ENCODE measurements at regions of chr18 and their contacts with region 1.

Region 1: GRCh38 chr18:10953672-10954071 is 195.7 kb downstream of the PIEZO2 start:
- DNase-seq: no peak
- ATAC-seq: no peak
- H3K4me3 ChIP-seq: no peak overlapping the region
- H3K4me3 Mint-ChIP-seq: no peak overlapping the region
- H3K27ac ChIP-seq: no peak overlapping the region
- H3K27ac Mint-ChIP-seq: no peak overlapping the region
- H3K4me1 ChIP-seq: no peaks in the 10 kb centered on the region
- H3K4me1 Mint-ChIP-seq: no peaks in the 10 kb centered on the region
- H3K27me3 ChIP-seq: no peaks in the 10 kb centered on the region
- H3K27me3 Mint-ChIP-seq: peaks cover 5% of the 10 kb centered on the region
- CTCF ChIP-seq: no peak

Region 2: DNA sequence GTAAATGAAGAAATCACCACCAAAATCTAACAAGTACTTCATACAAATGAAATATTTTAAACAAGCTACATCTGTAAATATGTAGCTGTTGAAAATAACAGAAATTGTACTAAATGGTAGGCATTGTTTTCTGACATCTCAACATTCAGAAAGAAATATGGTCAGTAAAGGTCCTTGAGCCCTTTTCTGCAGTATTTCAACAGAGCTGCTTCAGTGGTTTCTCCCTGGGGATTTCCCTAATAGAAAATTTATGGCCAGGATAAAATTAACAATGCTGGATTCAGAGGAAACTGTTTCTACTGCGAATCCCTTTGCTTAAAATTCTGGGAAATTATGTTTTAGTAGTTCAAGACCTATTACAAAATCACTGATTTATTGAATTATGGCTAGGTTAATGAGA is 60.9 kb before region 1 on chr18:
- CTCF ChIA-PET with region 1: no interaction called
- POLR2A ChIA-PET with region 1: no interaction called
- intact Hi-C with region 1: no loop called
- DNase-seq: no peak
- ATAC-seq: no peak
- H3K4me3 ChIP-seq: no peak overlapping the region
- H3K4me3 Mint-ChIP-seq: no peak overlapping the region
- H3K27ac ChIP-seq: no peak overlapping the region
- H3K27ac Mint-ChIP-seq: no peak overlapping the region
- H3K4me1 ChIP-seq: no peaks in the 10 kb centered on the region
- H3K4me1 Mint-ChIP-seq: no peaks in the 10 kb centered on the region
- H3K27me3 ChIP-seq: no peaks in the 10 kb centered on the region
- H3K27me3 Mint-ChIP-seq: peaks cover 8% of the 10 kb centered on the region
- CTCF ChIP-seq: no peak

Region 3: GRCh38 chr18:11019295-11020105 is 65.8 kb after region 1 on chr18:
- CTCF ChIA-PET with region 1: no interaction called
- POLR2A ChIA-PET with region 1: no interaction called
- intact Hi-C with region 1: loop called in 1 of 2 experiments (anchors 10 kb)
- DNase-seq: no peak
- ATAC-seq: no peak
- H3K4me3 ChIP-seq: no peak overlapping the region
- H3K4me3 Mint-ChIP-seq: no peak overlapping the region
- H3K27ac ChIP-seq: no peak overlapping the region
- H3K27ac Mint-ChIP-seq: no peak overlapping the region
- H3K4me1 ChIP-seq: no peaks in the 10 kb centered on the region
- H3K4me1 Mint-ChIP-seq: no peaks in the 10 kb centered on the region
- H3K27me3 ChIP-seq: no peaks in the 10 kb centered on the region
- H3K27me3 Mint-ChIP-seq: no peaks in the 10 kb centered on the region
- CTCF ChIP-seq: no peak

Region 4: GRCh38 chr18:11034884-11035283 is 81.2 kb after region 1 on chr18:
- CTCF ChIA-PET with region 1: no interaction called
- POLR2A ChIA-PET with region 1: no interaction called
- intact Hi-C with region 1: no loop called
- DNase-seq: no peak
- ATAC-seq: no peak
- H3K4me3 ChIP-seq: no peak overlapping the region
- H3K4me3 Mint-ChIP-seq: no peak overlapping the region
- H3K27ac ChIP-seq: no peak overlapping the region
- H3K27ac Mint-ChIP-seq: no peak overlapping the region
- H3K4me1 ChIP-seq: no peaks in the 10 kb centered on the region
- H3K4me1 Mint-ChIP-seq: no peaks in the 10 kb centered on the region
- H3K27me3 ChIP-seq: no peaks in the 10 kb centered on the region
- H3K27me3 Mint-ChIP-seq: no peaks in the 10 kb centered on the region
- CTCF ChIP-seq: no peak